ENCODE measurements at regions of chr7 and their contacts with region 1.

Region 1: DNA sequence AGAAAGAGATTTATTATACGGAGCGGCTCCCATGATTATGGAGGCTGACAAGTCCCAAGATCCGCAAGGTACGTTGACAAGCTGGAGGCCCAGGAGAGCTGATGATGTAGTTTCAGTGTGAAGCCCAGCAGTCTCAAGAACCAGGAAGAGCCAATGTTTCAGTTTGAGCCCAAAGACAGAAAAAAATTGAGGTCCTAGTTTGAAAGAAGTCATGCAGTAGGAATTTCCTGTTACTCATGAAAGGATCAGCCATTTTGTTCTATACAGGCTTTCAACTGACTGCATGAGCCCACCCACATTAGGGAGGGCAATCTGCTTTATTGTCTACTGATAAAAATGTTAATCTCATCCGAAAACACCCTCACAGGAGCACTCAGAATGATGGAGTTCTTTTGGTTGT is 51.5 kb downstream of the CCDC71L start:
- DNase-seq: no peak
- H3K4me3 Mint-ChIP-seq: no peak overlapping the region
- H3K27ac Mint-ChIP-seq: peak overlapping the region; percentile 32
- H3K4me1 Mint-ChIP-seq: peaks cover 11% of the 10 kb centered on the region
- H3K27me3 Mint-ChIP-seq: no peaks in the 10 kb centered on the region
- CTCF ChIP-seq: no peak

Region 2: DNA sequence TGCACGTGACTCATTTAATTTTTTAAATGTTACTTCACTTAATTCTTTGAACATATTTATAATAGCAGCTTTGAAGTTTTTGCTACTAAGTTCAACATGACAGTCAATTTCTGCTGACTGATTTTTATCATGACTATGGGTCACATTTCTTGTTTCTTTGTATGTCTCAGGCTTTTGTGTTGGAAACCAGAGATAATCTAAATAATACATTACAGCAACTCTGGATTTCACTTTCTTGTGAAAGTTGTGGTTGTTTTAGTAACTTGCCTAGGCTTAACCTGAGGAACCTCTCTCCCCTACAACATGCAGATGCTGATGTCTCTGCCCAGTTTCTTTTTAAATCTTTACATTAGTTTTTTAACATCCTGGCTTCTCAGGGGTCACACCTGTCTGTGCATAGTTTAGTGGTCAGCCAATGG is 129.2 kb before region 1 on chr7:
- CTCF ChIA-PET with region 1: no interaction called
- intact Hi-C with region 1: no loop called
- DNase-seq: no peak
- H3K4me3 Mint-ChIP-seq: no peak overlapping the region
- H3K27ac Mint-ChIP-seq: no peak overlapping the region
- H3K4me1 Mint-ChIP-seq: peaks cover 28% of the 10 kb centered on the region
- H3K27me3 Mint-ChIP-seq: no peaks in the 10 kb centered on the region
- CTCF ChIP-seq: no peak

Region 3: DNA sequence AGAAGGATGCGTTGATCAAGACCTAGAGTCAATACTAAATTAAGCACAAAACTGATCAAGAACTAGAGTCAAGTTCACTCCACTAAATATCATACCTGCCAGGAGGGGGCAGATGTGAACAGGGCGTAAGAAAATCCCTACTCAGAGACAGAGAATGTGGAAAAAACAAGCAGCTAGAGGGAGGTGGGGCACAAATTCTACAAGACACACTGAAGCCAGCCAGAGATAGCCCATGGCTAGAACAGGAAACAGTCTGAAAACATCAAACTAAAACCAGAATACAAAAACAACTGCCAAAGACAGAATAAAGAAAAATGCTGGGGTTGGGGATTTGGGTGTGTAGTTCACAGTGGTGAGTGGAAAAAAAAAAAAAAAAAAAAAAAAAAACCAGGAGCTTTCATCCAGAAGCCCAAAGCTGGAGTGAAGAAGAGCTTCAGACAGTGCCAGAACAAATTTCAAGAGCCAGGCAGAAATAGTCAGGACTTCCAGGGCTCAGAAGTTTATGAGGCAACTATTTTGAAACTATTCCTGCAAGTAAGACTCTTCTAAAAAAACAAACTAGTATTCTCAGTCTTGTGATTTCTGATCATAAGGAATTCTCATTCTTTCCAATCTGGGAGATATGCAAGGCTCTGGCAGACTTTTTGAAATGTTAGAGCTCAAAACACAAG is 66.7 kb before region 1 on chr7:
- CTCF ChIA-PET with region 1: interaction called, 13 read pairs
- intact Hi-C with region 1: loop called (anchors 5 kb)
- DNase-seq: peak; percentile 79
- H3K4me3 Mint-ChIP-seq: no peak overlapping the region
- H3K27ac Mint-ChIP-seq: peak overlapping the region; percentile 40
- H3K4me1 Mint-ChIP-seq: peaks cover 19% of the 10 kb centered on the region
- H3K27me3 Mint-ChIP-seq: no peaks in the 10 kb centered on the region
- CTCF ChIP-seq: peak; percentile 60

Region 4: DNA sequence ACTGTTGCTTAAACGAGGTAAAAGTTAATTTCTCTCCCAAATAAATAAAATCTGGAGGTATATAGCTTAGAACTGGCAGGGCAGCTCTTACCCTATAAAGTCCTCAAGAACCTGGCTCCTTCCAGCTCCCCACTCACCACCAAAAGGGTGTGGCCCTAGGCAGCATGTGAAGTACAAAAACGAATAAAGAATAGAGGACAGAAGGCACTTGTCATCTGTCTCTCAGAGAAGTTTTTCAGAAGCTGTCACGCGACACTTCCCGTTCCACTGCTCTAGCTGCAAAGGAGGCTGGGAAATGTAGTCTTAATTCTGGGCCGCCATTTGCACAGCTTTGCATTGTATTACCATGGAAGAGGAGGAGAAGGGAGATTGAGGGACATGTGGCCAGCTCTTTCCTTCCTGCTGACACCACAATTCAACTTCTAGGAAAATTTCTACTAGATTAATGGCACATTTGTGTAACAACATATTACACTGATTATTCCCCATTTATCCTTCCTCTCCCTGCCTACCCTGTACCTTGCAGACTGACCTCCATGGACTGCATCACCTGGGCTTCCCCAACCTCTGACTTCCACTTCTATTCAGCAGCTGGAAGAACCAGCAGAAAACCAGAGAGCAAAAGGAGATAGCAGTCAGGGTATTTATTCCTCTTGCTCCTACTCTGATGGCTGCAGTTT is 10.6 kb before region 1 on chr7:
- CTCF ChIA-PET with region 1: interaction called, 12 read pairs
- intact Hi-C with region 1: no loop called
- DNase-seq: peak; percentile 65
- H3K4me3 Mint-ChIP-seq: no peak overlapping the region
- H3K27ac Mint-ChIP-seq: no peak overlapping the region
- H3K4me1 Mint-ChIP-seq: no peaks in the 10 kb centered on the region
- H3K27me3 Mint-ChIP-seq: no peaks in the 10 kb centered on the region
- CTCF ChIP-seq: no peak

Region 5: DNA sequence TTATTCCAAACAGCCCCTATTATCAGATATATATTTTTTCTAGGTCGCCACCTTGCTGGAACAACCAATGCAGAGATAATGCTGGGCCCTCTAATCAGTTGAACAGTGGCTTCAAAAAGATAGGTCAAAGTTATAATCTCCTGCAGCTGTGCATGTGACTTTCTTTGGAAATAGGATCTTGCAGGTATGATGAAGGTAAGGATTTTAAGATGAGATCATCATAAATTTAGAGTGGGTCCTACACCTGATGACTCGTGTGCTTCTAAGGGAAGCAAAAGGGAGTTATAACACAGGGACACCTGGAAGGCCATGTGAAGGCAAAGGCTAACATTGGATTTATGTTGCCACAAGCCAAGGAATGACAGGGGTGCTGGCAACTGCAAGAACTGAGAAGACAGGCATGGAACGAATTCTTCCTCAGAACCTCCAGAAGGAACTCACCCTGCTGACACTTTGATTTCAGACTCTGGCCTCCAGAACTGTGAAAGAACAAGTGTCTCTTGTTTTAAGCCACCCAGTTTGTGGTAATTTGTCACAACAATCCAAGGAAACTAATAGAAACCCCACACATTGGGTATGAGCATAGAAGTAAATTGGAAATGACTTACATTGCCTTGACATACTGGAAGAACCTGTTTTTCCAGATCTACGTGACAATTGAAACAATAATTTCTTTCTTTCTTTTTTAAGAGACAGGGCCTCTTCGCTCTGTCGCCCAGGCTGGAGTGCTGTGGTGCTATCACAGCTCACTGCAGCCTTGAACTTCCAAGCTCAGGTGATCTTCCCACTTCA is 17.2 kb after region 1 on chr7:
- CTCF ChIA-PET with region 1: no interaction called
- intact Hi-C with region 1: loop called (anchors 2 kb)
- DNase-seq: peak; percentile 45
- H3K4me3 Mint-ChIP-seq: peak overlapping the region; percentile 65
- H3K27ac Mint-ChIP-seq: peak overlapping the region; percentile 98
- H3K4me1 Mint-ChIP-seq: peaks cover 60% of the 10 kb centered on the region
- H3K27me3 Mint-ChIP-seq: no peaks in the 10 kb centered on the region
- CTCF ChIP-seq: no peak

Region 6: DNA sequence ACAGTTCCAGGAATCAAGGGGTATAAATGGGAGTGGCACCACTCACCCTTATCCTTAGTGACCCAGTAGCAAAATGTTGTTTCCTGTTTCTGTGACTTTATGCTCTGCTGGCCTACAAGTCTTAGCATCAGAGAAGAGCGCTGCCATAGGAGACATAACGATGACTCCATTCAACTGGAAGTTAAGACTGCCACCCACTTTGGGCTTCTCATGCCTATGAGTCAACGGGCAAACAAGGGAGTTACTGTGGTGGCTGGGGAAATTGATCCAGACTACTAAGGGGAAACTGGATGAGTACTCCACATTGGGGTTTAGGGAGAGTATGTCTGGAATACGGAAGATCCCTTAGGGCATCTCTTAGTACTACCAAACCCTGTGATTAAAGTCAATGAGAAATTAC is 215.0 kb after region 1 on chr7:
- CTCF ChIA-PET with region 1: interaction called, 10 read pairs
- intact Hi-C with region 1: no loop called
- DNase-seq: peak; percentile 51
- H3K4me3 Mint-ChIP-seq: no peak overlapping the region
- H3K27ac Mint-ChIP-seq: peak overlapping the region; percentile 71
- H3K4me1 Mint-ChIP-seq: peaks cover 26% of the 10 kb centered on the region
- H3K27me3 Mint-ChIP-seq: no peaks in the 10 kb centered on the region
- CTCF ChIP-seq: no peak